ENCODE measurements at regions of chr1 and their contacts with region 1.

Region 1: GRCh38 chr1:3423245-3423829 is 31.1 kb upstream of the ARHGEF16 start:
- DNase-seq: peak; percentile 77 to 87
- H3K4me3 ChIP-seq: no peak overlapping the region
- H3K27ac ChIP-seq: peak overlapping the region; percentile 77 to 92
- H3K4me1 ChIP-seq: peaks cover 6 to 43% of the 10 kb centered on the region in 2 donors
- H3K27me3 ChIP-seq: no peaks in the 10 kb centered on the region
- CTCF ChIP-seq: no peak

Region 2: GRCh38 chr1:3012456-3013291 is 410.7 kb before region 1 on chr1:
- intact Hi-C with region 1: loop called (anchors 1 kb)
- DNase-seq: peak in 1 of 2 donors; percentile 82
- H3K4me3 ChIP-seq: peak overlapping the region; percentile 4 to 45
- H3K27ac ChIP-seq: peak overlapping the region in 1 of 2 donors; percentile 71
- H3K4me1 ChIP-seq: peaks cover 5 to 11% of the 10 kb centered on the region in 2 donors
- H3K27me3 ChIP-seq: no peaks in the 10 kb centered on the region
- CTCF ChIP-seq: peak; percentile 59 to 99 (median 94)

Region 3: DNA sequence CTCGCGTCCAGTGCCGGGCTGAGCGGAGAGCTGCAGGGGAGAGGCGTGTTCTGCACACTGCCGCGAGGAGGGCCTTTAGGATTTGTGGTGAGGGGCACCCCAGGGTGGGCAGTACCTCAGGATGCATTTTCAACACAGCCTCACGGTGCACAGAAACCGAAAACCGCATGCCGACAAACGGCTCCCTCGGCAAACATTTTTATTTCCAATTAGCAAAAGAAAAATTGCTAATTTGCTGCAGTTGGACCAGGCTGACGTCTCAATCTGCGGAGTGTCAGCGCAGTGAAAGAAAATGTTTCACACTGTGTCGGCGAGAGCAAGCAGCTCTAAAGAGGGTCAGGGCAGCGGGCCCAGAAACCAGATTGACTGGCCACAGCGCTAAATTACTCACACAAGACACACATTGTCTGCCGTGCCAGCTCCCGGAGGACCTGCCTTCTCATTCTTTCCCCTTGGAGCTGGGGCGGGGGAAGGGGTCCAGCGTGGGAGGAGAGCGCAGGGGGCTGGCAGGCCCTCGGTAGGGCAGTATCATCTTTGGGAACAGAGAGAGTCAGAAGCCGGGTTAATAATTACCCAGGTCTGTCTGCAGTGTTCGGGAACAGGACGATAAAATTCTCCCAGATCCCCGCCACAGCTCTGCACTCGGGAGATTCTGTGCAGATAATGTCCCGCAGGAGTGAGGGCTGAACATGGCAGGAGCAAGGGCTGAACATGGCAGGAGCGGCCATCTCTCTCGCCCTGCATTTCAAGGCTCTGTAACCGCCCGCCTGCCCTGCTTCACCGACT is 204.1 kb before region 1 on chr1:
- intact Hi-C with region 1: loop called (anchors 5 kb)
- DNase-seq: peak; percentile 54 to 89
- H3K4me3 ChIP-seq: peak overlapping the region in 1 of 2 donors; percentile 22
- H3K27ac ChIP-seq: peak overlapping the region; percentile 73 to 76
- H3K4me1 ChIP-seq: peaks cover 31 to 65% of the 10 kb centered on the region in 2 donors
- H3K27me3 ChIP-seq: no peaks in the 10 kb centered on the region
- CTCF ChIP-seq: no peak

Region 4: GRCh38 chr1:3827813-3828307 is 404.5 kb after region 1 on chr1:
- intact Hi-C with region 1: no loop called
- DNase-seq: no peak
- H3K4me3 ChIP-seq: no peak overlapping the region
- H3K27ac ChIP-seq: no peak overlapping the region
- H3K4me1 ChIP-seq: no peaks in the 10 kb centered on the region
- H3K27me3 ChIP-seq: no peaks in the 10 kb centered on the region
- CTCF ChIP-seq: no peak